OCI-LY7 (cell line): ENCODE measurements at regions of chr3 and their contacts with region 1.

Region 1: GRCh38 chr3:160343132-160343531 is 55.9 kb downstream of the IFT80 start:
- DNase-seq: peak; percentile 23
- H3K4me3 ChIP-seq: no peak overlapping the region
- H3K27ac ChIP-seq: no peak overlapping the region
- H3K4me1 ChIP-seq: no peaks in the 10 kb centered on the region
- CTCF ChIP-seq: peak; percentile 72

Region 2: DNA sequence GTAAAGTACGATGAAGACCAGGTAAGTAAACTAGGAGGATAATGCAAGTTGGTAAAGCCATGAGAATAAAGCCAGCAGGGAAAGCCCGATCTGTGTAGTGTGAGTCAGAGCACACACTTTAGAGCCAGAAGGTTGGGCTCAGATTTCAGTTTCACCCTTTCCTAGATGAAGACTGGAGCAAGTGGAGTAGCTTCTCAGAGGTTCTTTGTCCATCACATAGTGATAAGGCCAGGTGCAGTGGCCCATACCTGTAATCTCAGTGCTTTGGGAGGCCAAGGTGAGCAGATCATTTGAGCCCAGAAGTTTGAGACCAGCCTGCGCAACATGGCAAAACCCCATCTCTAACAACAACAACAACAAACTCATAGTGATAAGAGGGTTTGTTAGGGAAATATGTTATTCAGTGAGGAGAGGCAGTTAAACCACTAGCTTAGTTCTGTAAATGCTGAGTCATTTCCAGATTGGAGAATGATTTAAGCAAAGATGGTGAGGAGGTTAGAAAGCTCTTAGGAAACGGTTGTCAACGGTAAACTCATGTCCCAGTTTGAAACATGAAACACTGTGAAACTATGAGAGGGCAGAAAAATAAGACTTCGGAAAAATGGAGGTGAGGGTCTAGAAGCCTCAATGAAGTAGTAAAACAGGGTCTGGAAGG is 315.5 kb before region 1 on chr3:
- CTCF ChIA-PET with region 1: no interaction called
- POLR2A ChIA-PET with region 1: no interaction called
- intact Hi-C with region 1: loop called (anchors 5 kb)
- DNase-seq: no peak
- H3K4me3 ChIP-seq: no peak overlapping the region
- H3K27ac ChIP-seq: no peak overlapping the region
- H3K4me1 ChIP-seq: no peaks in the 10 kb centered on the region
- CTCF ChIP-seq: no peak

Region 3: DNA sequence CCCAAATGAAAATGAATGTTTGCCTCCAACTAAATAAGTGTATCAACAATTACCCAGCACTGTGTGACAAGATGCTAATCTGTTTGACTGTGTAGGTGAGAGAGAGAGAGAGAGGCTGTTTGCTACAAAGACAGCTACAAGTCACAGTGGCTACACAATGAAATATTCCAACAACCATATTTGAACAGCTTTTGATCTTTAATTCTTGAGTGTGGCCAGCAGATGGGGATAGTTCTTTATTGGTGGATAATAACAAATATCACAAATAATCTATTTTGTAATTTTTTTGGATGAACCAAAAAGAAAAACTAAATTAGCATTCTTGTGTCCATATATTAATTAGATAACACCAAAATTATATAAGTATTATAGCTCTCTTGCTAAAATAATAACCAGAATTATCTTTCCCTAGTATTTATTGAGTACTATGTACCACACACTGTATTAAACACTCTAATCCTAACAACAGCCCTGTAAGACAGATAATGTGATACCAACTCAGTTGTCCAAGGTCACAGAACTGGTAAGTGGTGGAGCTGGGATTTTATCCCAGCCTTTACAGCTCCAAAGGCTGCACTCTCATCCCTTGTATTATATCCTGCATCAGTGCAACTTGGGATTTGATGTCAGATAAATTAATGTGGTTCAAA is 179.8 kb before region 1 on chr3:
- CTCF ChIA-PET with region 1: no interaction called
- POLR2A ChIA-PET with region 1: no interaction called
- intact Hi-C with region 1: loop called (anchors 5 kb)
- DNase-seq: peak; percentile 12
- H3K4me3 ChIP-seq: no peak overlapping the region
- H3K27ac ChIP-seq: no peak overlapping the region
- H3K4me1 ChIP-seq: no peaks in the 10 kb centered on the region
- CTCF ChIP-seq: peak; percentile 74

Region 4: DNA sequence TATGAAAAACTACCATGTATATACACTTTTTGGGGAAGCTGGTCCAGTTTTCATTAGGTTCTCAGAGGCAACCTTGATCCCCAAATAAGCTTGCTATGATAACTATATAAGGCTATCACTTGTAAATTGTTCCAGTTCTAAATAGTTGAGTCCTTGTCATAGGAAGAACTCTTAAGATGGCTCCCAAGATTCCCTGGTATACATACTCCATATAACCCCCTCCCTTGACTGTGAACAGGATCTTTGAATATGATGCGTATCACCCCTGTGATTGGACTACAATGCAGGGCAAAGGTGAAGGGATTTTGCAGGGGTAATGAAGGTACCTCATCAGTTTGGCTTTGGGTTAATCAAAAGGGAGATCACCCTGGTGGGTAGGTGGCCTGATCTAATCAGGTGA is 155.1 kb after region 1 on chr3:
- CTCF ChIA-PET with region 1: no interaction called
- POLR2A ChIA-PET with region 1: no interaction called
- intact Hi-C with region 1: no loop called
- DNase-seq: no peak
- H3K4me3 ChIP-seq: no peak overlapping the region
- H3K27ac ChIP-seq: no peak overlapping the region
- H3K4me1 ChIP-seq: no peaks in the 10 kb centered on the region
- CTCF ChIP-seq: no peak

Region 5: DNA sequence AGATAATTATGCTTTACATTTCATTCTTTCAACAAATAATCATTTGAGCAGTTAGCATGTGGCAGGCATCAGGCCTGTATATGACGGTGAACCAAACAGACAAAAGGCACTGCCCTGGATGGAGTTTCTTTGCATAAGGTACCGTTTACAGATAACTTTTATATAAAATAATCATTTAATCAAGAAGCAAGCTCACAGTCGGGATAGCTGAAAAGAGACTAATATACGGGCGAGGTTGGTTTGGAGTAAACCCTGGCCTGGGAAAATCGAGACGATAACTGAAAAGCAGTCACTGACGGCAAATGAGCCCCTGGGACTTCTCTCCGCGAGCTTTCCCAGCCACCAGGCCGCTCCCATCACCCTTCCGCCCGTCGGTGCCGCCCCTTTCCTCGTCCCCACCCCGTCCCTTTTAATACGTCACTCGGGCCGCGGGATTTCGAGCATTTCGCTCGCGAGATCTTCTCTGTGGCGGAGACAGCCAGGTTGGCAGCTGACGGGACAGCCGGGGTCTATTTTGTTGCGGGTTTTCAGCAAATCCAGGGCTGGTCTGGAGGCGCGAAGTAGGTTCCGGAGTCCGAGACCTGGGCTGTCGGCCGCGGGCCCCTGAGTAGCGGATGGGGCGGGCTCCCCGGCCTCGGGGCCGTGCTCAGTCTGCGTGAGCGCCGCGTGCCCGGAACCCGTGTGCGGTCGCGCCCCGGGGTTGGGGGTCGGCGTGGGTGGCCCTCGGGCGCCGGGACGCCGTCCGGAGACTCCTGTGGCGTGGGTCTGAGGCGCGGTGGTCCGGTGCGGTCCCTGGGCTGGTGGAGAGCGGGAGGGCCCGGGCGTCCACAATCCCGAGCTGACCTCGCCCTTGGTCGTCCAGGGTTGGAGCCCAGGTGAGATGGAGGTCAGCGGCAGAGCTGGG is 878.0 kb after region 1 on chr3 and contains the start of gene NMD3:
- CTCF ChIA-PET with region 1: no interaction called
- POLR2A ChIA-PET with region 1: no interaction called
- intact Hi-C with region 1: no loop called
- DNase-seq: peak; percentile 94
- H3K4me3 ChIP-seq: peak within 1 kb of the TSS; percentile 94
- H3K27ac ChIP-seq: peak within 1 kb of the TSS; percentile 52
- H3K4me1 ChIP-seq: peaks cover 20% of the 10 kb centered on the region
- CTCF ChIP-seq: no peak
- total RNA-seq, gene NMD3: 30.0 and 36.1 TPM in 2 replicates